ENCODE measurements at regions of chr5 and their contacts with region 1.

Region 1: GRCh38 chr5:112146323-112147226 is 272.5 kb downstream of the EPB41L4A start:
- DNase-seq: peak in 1 of 2 donors; percentile 83
- ATAC-seq: peak; percentile 86 to 99 (median 98)
- H3K4me3 ChIP-seq: no peak overlapping the region
- H3K4me3 Mint-ChIP-seq: no peak overlapping the region
- H3K27ac ChIP-seq: no peak overlapping the region
- H3K27ac Mint-ChIP-seq: no peak overlapping the region
- H3K4me1 ChIP-seq: no peaks in the 10 kb centered on the region
- H3K4me1 Mint-ChIP-seq: no peaks in the 10 kb centered on the region
- H3K27me3 ChIP-seq: no peaks in the 10 kb centered on the region
- H3K27me3 Mint-ChIP-seq: peaks cover 3 to 18% of the 10 kb centered on the region in 2 donors
- CTCF ChIP-seq: peak; percentile 80

Region 2: GRCh38 chr5:110757118-110757729 is 1389.4 kb before region 1 on chr5:
- intact Hi-C with region 1: loop called (anchors 2 kb)
- DNase-seq: peak in 1 of 2 donors; percentile 70
- ATAC-seq: peak in 2 of 3 donors; percentile 61 to 78
- H3K4me3 ChIP-seq: no peak overlapping the region
- H3K4me3 Mint-ChIP-seq: no peak overlapping the region
- H3K27ac ChIP-seq: no peak overlapping the region
- H3K27ac Mint-ChIP-seq: no peak overlapping the region
- H3K4me1 ChIP-seq: no peaks in the 10 kb centered on the region
- H3K4me1 Mint-ChIP-seq: peaks cover 10% of the 10 kb centered on the region in 2 donors
- H3K27me3 ChIP-seq: no peaks in the 10 kb centered on the region
- H3K27me3 Mint-ChIP-seq: no peaks in the 10 kb centered on the region
- CTCF ChIP-seq: peak; percentile 84

Region 3: GRCh38 chr5:111158105-111158744 is 988.4 kb before region 1 on chr5:
- intact Hi-C with region 1: loop called (anchors 1 kb)
- DNase-seq: peak; percentile 24 to 92
- ATAC-seq: peak; percentile 77 to 87 (median 79)
- H3K4me3 ChIP-seq: no peak overlapping the region
- H3K4me3 Mint-ChIP-seq: no peak overlapping the region
- H3K27ac ChIP-seq: no peak overlapping the region
- H3K27ac Mint-ChIP-seq: no peak overlapping the region
- H3K4me1 ChIP-seq: no peaks in the 10 kb centered on the region
- H3K4me1 Mint-ChIP-seq: no peaks in the 10 kb centered on the region
- H3K27me3 ChIP-seq: no peaks in the 10 kb centered on the region
- H3K27me3 Mint-ChIP-seq: no peaks in the 10 kb centered on the region
- CTCF ChIP-seq: peak; percentile 99

Region 4: DNA sequence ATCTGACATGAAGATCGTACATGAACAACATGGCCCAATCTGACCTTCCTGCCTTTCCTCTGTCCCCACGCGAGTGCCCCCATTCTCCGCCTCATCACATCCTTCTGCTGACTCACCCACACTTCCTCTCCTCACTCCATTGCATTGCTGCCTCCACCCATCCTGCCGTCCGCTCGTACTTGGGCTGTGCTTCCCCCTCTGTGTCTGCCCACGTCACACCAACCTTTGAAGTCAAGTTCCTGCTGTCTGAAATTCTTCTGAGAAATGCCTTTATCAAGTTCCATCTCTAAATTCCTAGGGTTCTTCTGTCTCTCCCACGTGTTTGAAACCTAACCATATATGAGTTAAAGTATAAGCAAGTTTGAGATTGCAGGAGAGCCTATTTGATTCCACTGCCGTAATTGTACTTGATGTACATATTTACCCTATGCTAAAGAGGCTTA is 616.3 kb before region 1 on chr5:
- intact Hi-C with region 1: loop called (anchors 1 kb)
- DNase-seq: peak; percentile 70 to 94
- ATAC-seq: peak; percentile 99 to 100 (median 100)
- H3K4me3 ChIP-seq: peak overlapping the region; percentile 1
- H3K4me3 Mint-ChIP-seq: peak overlapping the region; percentile 71
- H3K27ac ChIP-seq: peak overlapping the region; percentile 72
- H3K27ac Mint-ChIP-seq: peak overlapping the region; percentile 84 to 91
- H3K4me1 ChIP-seq: peaks cover 10% of the 10 kb centered on the region
- H3K4me1 Mint-ChIP-seq: peaks cover 14 to 15% of the 10 kb centered on the region in 2 donors
- H3K27me3 ChIP-seq: no peaks in the 10 kb centered on the region
- H3K27me3 Mint-ChIP-seq: peaks cover 0 to 3% of the 10 kb centered on the region in 2 donors
- CTCF ChIP-seq: no peak

Region 5: GRCh38 chr5:111550279-111551020 is 596.1 kb before region 1 on chr5:
- intact Hi-C with region 1: loop called (anchors 1 kb)
- DNase-seq: peak; percentile 57 to 82
- ATAC-seq: peak; percentile 84 to 98 (median 95)
- H3K4me3 ChIP-seq: no peak overlapping the region
- H3K4me3 Mint-ChIP-seq: peak overlapping the region; percentile 19
- H3K27ac ChIP-seq: no peak overlapping the region
- H3K27ac Mint-ChIP-seq: peak overlapping the region in 1 of 2 donors; percentile 59
- H3K4me1 ChIP-seq: peaks cover 3% of the 10 kb centered on the region
- H3K4me1 Mint-ChIP-seq: peaks cover 21 to 24% of the 10 kb centered on the region in 2 donors
- H3K27me3 ChIP-seq: no peaks in the 10 kb centered on the region
- H3K27me3 Mint-ChIP-seq: peaks cover 0 to 5% of the 10 kb centered on the region in 2 donors
- CTCF ChIP-seq: peak; percentile 74

Region 6: GRCh38 chr5:112649882-112650281 is 503.3 kb after region 1 on chr5:
- intact Hi-C with region 1: no loop called
- DNase-seq: no peak
- ATAC-seq: no peak
- H3K4me3 ChIP-seq: no peak overlapping the region
- H3K4me3 Mint-ChIP-seq: no peak overlapping the region
- H3K27ac ChIP-seq: no peak overlapping the region
- H3K27ac Mint-ChIP-seq: no peak overlapping the region
- H3K4me1 ChIP-seq: no peaks in the 10 kb centered on the region
- H3K4me1 Mint-ChIP-seq: peaks cover 0 to 19% of the 10 kb centered on the region in 2 donors
- H3K27me3 ChIP-seq: no peaks in the 10 kb centered on the region
- H3K27me3 Mint-ChIP-seq: peaks cover 14 to 30% of the 10 kb centered on the region in 2 donors
- CTCF ChIP-seq: no peak

Measured in natural killer cell (primary cell).